MCF 10A (cell line): ENCODE measurements at regions of chr3 and their contacts with region 1.

Region 1: DNA sequence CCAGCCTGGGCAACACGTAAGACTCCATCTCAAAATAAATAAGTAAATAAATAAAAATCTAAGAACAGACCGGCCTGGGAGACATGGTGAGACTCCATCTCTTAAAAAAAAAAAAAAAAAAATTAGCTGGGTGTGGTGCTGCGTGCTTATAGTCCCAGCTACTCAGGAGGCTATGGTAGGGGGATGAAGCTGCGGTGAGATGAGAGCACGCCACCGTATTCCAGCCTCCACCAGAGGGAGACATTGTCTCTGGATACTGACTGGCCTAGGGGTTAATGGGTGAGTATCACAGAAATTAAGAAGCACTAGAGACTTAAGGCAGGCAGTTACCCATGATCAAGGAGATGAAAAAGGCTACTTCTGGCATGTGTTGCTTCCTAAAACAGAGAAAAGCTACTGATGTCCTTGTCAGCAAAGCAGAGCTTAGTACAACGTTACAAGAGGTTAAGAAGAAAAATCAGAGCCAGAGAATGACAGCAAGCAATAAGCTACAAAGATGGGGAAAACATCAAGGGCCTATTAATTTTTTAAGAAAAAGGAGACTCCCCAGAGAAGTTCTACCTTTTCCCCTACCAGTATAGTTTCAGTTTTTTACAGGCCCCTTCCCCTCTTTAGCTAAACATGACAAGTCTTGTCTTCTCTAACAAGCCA is 8.6 kb downstream of the TFRC start:
- DNase-seq: peak; percentile 78
- H3K4me3 Mint-ChIP-seq: no peak overlapping the region
- H3K27ac Mint-ChIP-seq: no peak overlapping the region
- H3K4me1 Mint-ChIP-seq: peaks cover 10% of the 10 kb centered on the region
- H3K27me3 Mint-ChIP-seq: no peaks in the 10 kb centered on the region
- CTCF ChIP-seq: peak; percentile 65

Region 2: GRCh38 chr3:194738254-194739093 is 1334.8 kb before region 1 on chr3:
- CTCF ChIA-PET with region 1: no interaction called
- POLR2A ChIA-PET with region 1: no interaction called
- intact Hi-C with region 1: no loop called
- DNase-seq: peak; percentile 73
- H3K4me3 Mint-ChIP-seq: no peak overlapping the region
- H3K27ac Mint-ChIP-seq: no peak overlapping the region
- H3K4me1 Mint-ChIP-seq: peaks cover 13% of the 10 kb centered on the region
- H3K27me3 Mint-ChIP-seq: peaks cover 1% of the 10 kb centered on the region
- CTCF ChIP-seq: no peak

Region 3: DNA sequence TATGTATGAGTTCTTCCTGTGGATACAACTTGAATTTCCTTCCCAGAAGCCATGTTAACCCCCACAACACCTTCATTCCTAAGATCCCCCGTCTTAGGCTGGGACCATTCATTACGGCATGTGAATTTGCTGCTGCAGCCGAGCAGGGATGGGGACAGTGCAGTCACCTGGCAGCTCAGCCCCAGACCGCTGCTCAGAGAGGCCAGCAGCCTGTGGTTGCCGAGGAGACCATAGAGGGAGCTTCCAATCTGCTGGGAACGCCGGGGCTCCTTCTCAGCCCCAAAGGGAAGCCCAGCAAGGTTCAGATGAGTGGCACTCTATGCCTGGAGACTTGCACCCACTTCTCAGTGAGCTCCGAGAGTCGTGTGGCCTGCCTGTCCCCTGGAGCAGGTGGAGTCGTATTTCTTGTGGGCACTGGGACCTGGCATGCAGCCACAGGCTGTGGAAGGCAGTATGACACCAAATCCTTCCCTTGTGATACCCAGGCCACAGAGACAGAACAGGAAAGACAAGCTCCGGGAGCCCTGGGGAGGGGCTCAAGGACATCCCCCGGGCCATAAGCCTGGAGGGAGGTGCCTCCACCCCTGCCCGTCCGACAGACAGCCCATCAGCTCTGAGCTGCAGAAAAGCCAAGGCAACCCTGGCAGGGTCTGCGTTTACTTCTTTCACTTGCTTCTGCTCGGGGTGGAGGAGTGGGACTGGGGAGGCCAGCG is 1220.3 kb before region 1 on chr3:
- CTCF ChIA-PET with region 1: no interaction called
- POLR2A ChIA-PET with region 1: no interaction called
- intact Hi-C with region 1: no loop called
- DNase-seq: no peak
- H3K4me3 Mint-ChIP-seq: no peak overlapping the region
- H3K27ac Mint-ChIP-seq: no peak overlapping the region
- H3K4me1 Mint-ChIP-seq: no peaks in the 10 kb centered on the region
- H3K27me3 Mint-ChIP-seq: no peaks in the 10 kb centered on the region
- CTCF ChIP-seq: no peak

Region 4: DNA sequence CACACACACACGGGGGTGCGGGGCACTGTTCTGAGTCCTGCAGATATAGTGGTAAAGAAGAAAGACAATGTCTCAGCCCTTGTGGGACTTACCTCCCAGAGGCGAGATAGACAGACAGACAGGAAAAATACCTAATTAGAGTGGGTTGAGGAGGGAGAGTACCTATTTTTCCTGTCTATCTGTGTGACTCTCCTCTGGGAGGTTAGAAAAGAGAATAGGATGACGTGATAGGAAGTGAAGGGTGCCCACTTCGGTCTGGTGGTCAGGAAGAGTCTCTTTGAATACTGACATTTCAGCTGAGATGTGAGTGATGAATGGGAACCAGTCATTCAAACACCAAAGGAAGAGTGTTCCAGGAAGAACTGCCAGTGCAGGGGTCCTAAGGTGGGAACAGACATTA is 485.5 kb before region 1 on chr3:
- CTCF ChIA-PET with region 1: no interaction called
- POLR2A ChIA-PET with region 1: no interaction called
- intact Hi-C with region 1: no loop called
- DNase-seq: no peak
- H3K4me3 Mint-ChIP-seq: no peak overlapping the region
- H3K27ac Mint-ChIP-seq: no peak overlapping the region
- H3K4me1 Mint-ChIP-seq: peaks cover 11% of the 10 kb centered on the region
- H3K27me3 Mint-ChIP-seq: no peaks in the 10 kb centered on the region
- CTCF ChIP-seq: no peak

Region 5: DNA sequence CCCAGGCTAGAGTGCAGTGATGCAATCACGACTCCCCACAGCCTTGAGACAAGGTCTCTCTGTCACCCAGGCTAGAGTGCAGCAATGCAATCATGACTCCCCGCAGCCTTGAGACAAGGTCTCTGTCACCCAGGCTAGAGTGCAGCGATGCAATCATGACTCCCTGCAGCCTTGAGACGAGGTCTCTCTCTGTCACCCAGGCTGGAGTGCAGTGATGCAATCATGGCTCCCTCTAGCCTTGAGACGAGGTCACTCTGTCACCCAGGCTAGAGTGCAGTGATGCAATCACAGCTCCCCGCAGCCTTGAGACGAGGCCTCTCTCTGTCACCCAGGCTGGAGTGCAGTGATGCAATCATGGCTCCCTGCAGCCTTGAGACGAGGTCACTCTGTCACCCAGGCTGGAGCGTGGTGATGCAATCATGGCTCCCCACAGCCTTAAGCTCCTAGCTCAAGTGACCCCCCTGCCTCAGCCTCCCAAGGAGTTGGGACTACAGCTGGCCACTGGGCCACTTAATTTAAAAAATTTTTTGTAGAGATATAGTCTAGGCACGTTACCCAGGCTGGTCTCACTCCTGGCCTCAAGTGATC is 17.5 kb before region 1 on chr3:
- CTCF ChIA-PET with region 1: interaction called, 14 read pairs
- POLR2A ChIA-PET with region 1: interaction called, 7 read pairs
- intact Hi-C with region 1: no loop called
- DNase-seq: peak; percentile 30
- H3K4me3 Mint-ChIP-seq: no peak overlapping the region
- H3K27ac Mint-ChIP-seq: no peak overlapping the region
- H3K4me1 Mint-ChIP-seq: no peaks in the 10 kb centered on the region
- H3K27me3 Mint-ChIP-seq: no peaks in the 10 kb centered on the region
- CTCF ChIP-seq: no peak

Region 6: GRCh38 chr3:196136026-196136984 is 63.0 kb after region 1 on chr3:
- CTCF ChIA-PET with region 1: interaction called, 24 read pairs
- POLR2A ChIA-PET with region 1: interaction called, 70 read pairs
- intact Hi-C with region 1: no loop called
- DNase-seq: peak; percentile 91
- H3K4me3 Mint-ChIP-seq: peak overlapping the region; percentile 58
- H3K27ac Mint-ChIP-seq: peak overlapping the region; percentile 89
- H3K4me1 Mint-ChIP-seq: peaks cover 29% of the 10 kb centered on the region
- H3K27me3 Mint-ChIP-seq: no peaks in the 10 kb centered on the region
- CTCF ChIP-seq: no peak

Region 7: GRCh38 chr3:196186651-196187573 is 113.6 kb after region 1 on chr3:
- CTCF ChIA-PET with region 1: interaction called, 12 read pairs
- POLR2A ChIA-PET with region 1: no interaction called
- intact Hi-C with region 1: no loop called
- DNase-seq: no peak
- H3K4me3 Mint-ChIP-seq: no peak overlapping the region
- H3K27ac Mint-ChIP-seq: no peak overlapping the region
- H3K4me1 Mint-ChIP-seq: peaks cover 7% of the 10 kb centered on the region
- H3K27me3 Mint-ChIP-seq: no peaks in the 10 kb centered on the region
- CTCF ChIP-seq: no peak

Region 8: DNA sequence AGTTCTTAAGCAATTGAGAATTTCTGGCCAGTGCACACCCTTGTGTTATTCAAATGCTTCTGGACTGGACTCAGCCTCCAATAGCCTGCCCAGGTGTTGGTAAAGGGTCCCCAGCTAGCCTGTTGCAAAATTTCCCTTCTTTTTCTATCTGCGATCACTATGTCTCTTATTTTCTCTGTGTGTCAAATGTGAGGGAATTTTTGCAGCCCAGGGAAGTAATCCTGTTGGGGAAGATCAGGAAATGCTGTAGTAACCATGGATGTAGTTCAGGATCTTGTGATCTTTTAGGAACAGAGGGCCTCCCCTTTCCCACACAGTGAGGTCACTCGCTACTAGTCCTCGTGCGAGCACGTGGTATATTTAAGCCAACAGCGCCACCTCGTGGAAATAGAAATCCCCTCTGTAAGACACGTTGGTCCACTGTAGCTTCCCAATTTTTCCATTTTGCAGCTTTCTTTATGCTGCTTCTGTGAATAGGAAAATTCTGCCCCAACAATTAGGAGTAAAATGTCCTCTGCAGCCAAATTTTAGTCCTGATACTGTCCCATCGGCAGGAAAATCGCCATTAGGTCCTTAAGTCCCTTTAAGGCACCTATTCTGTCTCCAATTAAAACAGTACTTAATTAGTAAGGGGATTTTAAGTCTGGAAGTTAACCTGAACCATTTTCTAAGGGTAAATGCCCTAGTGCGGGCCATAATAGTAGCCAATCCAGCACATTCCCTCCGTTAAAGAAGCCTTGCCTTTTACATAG is 445.8 kb after region 1 on chr3:
- CTCF ChIA-PET with region 1: interaction called, 4 read pairs
- POLR2A ChIA-PET with region 1: interaction called, 3 read pairs
- intact Hi-C with region 1: loop called (anchors 2 kb)
- DNase-seq: peak; percentile 82
- H3K4me3 Mint-ChIP-seq: no peak overlapping the region
- H3K27ac Mint-ChIP-seq: no peak overlapping the region
- H3K4me1 Mint-ChIP-seq: no peaks in the 10 kb centered on the region
- H3K27me3 Mint-ChIP-seq: no peaks in the 10 kb centered on the region
- CTCF ChIP-seq: peak; percentile 65